Activated naive CD4-positive, alpha-beta T cell treated with anti-CD3 and anti-CD28 coated beads for 36 hours (primary cell): ENCODE measurements at regions of chr5 and their contacts with region 1.

Region 1: GRCh38 chr5:96113170-96113939 is 151.7 kb upstream of the ELL2 start:
- DNase-seq: peak; percentile 19
- H3K4me3 Mint-ChIP-seq: no peak overlapping the region
- H3K27ac Mint-ChIP-seq: peak overlapping the region; percentile 77
- H3K4me1 Mint-ChIP-seq: peaks cover 28% of the 10 kb centered on the region
- H3K27me3 Mint-ChIP-seq: peaks cover 4% of the 10 kb centered on the region

Region 2: DNA sequence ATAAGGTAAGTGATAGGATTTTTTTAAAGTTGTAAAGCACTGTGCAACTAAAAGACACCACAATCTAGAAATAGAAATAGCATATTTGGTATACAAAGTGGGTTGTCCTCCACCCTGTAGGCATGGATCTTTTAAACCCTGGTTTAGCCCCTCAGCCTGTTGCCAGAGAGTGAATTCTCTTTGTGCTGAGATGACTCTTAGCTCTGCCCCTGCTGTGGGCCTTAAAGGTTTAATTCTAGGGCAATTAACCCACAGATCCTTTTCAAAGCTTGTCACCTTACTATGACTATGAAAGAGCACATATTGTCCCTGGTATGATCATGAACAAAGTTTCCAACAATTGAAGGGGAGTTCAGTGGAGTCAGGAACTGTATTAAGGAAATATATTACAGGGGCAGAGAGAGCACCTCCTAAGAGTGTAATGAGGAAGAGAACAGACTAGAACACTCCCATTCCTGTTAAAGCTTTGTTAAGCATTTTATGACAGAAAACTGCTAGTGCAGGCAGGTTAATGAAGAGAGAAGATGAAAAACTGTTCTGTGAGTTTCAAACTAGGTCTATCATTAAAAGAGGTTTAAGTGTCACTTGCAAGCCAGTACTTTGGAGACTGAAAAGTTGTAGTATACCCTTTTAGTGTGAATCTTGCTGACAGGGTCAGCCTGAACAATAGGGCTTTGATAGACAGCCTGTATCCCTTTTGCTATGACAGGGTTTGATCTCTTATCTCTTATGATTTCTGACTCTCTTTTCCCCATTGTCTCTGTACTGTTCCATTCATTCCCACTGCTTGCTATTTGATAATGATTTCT is 47.6 kb before region 1 on chr5:
- CTCF ChIA-PET with region 1: interaction called, 3 read pairs
- intact Hi-C with region 1: loop called (anchors 1 kb)
- DNase-seq: peak; percentile 37
- H3K4me3 Mint-ChIP-seq: no peak overlapping the region
- H3K27ac Mint-ChIP-seq: peak overlapping the region; percentile 59
- H3K4me1 Mint-ChIP-seq: peaks cover 31% of the 10 kb centered on the region
- H3K27me3 Mint-ChIP-seq: no peaks in the 10 kb centered on the region

Region 3: DNA sequence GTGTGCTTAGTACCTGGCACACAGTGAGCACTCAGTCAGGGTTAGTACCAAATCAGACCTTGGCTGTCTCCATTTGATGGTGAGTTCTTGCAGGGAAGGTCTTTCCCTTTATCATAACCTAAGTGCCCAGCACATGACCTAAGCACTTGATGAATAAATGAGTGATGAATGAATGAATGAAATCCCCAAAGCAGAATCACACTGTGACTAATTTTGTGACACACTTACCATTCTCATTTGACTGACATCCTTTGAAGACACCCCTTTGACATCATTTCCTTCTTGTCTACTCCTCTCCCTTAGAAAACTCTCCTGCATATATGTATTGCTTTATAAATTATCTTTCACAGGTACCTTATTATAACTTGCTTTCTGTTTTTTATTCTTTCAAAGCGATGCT is 21.5 kb before region 1 on chr5:
- CTCF ChIA-PET with region 1: interaction called, 3 read pairs
- intact Hi-C with region 1: loop called (anchors 1 kb)
- DNase-seq: no peak
- H3K4me3 Mint-ChIP-seq: no peak overlapping the region
- H3K27ac Mint-ChIP-seq: no peak overlapping the region
- H3K4me1 Mint-ChIP-seq: peaks cover 6% of the 10 kb centered on the region
- H3K27me3 Mint-ChIP-seq: peaks cover 6% of the 10 kb centered on the region

Region 4: GRCh38 chr5:96146675-96147074 is 33.3 kb after region 1 on chr5:
- CTCF ChIA-PET with region 1: no interaction called
- intact Hi-C with region 1: loop called (anchors 1 kb)
- DNase-seq: peak; percentile 19
- H3K4me3 Mint-ChIP-seq: no peak overlapping the region
- H3K27ac Mint-ChIP-seq: no peak overlapping the region
- H3K4me1 Mint-ChIP-seq: peaks cover 5% of the 10 kb centered on the region
- H3K27me3 Mint-ChIP-seq: peaks cover 3% of the 10 kb centered on the region

Region 5: GRCh38 chr5:96151891-96152290 is 38.5 kb after region 1 on chr5:
- CTCF ChIA-PET with region 1: no interaction called
- intact Hi-C with region 1: loop called (anchors 1 kb)
- DNase-seq: peak; percentile 63
- H3K4me3 Mint-ChIP-seq: no peak overlapping the region
- H3K27ac Mint-ChIP-seq: peak overlapping the region; percentile 10
- H3K4me1 Mint-ChIP-seq: peaks cover 6% of the 10 kb centered on the region
- H3K27me3 Mint-ChIP-seq: no peaks in the 10 kb centered on the region

Region 6: DNA sequence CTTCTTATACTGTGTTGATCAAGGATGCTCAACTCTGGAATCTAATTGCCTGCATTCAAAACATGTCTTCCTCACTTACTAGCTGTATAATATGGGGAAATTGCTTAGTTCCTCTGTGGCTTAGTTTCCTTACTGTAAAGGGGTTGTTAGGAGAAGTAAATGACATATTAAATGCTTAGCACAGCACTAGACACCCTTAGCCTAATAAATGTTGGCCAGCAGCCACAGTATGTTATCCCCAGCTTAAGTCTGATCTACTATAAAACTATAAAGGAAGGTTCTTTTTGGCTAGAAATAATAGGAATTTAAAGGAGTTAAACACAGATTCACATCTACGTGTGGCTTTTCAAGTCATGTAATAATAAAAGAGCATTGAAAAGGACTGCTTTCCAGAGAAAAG is 87.3 kb after region 1 on chr5:
- CTCF ChIA-PET with region 1: no interaction called
- intact Hi-C with region 1: no loop called
- DNase-seq: no peak
- H3K4me3 Mint-ChIP-seq: no peak overlapping the region
- H3K27ac Mint-ChIP-seq: no peak overlapping the region
- H3K4me1 Mint-ChIP-seq: no peaks in the 10 kb centered on the region
- H3K27me3 Mint-ChIP-seq: peaks cover 23% of the 10 kb centered on the region

Region 7: DNA sequence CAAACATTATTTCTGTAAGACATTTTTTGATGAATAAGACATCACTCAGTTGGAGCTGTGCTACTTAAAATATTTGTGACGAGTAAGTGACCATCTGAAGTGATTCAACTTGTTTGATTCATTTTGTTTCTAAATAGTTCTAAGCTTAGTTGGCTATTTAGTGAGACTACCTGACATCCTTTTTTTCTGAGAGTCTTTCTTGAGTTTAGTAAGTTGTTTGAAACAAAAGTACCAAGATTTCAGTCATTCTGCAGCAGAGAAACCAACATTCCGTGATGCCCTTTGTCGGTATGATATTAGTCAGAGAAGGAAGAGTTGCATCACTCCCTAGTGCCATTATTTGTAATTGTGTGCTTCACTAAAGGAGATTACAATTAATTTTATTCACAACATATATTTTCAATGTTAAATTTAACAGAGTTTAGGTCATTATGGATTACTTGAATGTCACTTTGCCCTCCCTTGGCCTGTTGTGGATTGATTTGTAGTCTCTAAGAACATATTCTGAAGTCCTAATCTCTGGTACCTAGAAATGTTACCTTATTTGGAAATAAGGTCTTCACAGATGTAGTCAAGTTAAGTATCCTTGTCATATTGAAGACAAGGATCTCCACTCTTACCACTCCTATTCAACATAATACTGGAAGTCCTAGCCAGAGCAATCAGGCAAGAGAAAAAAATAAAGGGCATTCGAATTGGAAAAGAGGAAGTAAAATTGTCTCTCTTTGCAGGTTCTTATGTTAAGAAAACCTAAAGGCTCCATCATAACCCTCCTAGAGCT is 107.4 kb after region 1 on chr5:
- CTCF ChIA-PET with region 1: no interaction called
- intact Hi-C with region 1: loop called (anchors 2 kb)
- DNase-seq: peak; percentile 22
- H3K4me3 Mint-ChIP-seq: no peak overlapping the region
- H3K27ac Mint-ChIP-seq: no peak overlapping the region
- H3K4me1 Mint-ChIP-seq: peaks cover 11% of the 10 kb centered on the region
- H3K27me3 Mint-ChIP-seq: peaks cover 16% of the 10 kb centered on the region